ENCODE measurements at regions of chr2 and their contacts with region 1.

Region 1: GRCh38 chr2:99471654-99472599 is 17.9 kb downstream of the REV1 start:
- DNase-seq: no peak
- ATAC-seq: no peak
- H3K4me3 ChIP-seq: no peak overlapping the region
- H3K27ac ChIP-seq: no peak overlapping the region
- H3K4me1 ChIP-seq: peaks cover 3% of the 10 kb centered on the region; the same call in 1 of the 2 replicates
- H3K27me3 ChIP-seq: no peaks in the 10 kb centered on the region
- CTCF ChIP-seq: no peak
- POLR2A ChIP-seq: no peak
- RAD21 ChIP-seq: no peak

Region 2: DNA sequence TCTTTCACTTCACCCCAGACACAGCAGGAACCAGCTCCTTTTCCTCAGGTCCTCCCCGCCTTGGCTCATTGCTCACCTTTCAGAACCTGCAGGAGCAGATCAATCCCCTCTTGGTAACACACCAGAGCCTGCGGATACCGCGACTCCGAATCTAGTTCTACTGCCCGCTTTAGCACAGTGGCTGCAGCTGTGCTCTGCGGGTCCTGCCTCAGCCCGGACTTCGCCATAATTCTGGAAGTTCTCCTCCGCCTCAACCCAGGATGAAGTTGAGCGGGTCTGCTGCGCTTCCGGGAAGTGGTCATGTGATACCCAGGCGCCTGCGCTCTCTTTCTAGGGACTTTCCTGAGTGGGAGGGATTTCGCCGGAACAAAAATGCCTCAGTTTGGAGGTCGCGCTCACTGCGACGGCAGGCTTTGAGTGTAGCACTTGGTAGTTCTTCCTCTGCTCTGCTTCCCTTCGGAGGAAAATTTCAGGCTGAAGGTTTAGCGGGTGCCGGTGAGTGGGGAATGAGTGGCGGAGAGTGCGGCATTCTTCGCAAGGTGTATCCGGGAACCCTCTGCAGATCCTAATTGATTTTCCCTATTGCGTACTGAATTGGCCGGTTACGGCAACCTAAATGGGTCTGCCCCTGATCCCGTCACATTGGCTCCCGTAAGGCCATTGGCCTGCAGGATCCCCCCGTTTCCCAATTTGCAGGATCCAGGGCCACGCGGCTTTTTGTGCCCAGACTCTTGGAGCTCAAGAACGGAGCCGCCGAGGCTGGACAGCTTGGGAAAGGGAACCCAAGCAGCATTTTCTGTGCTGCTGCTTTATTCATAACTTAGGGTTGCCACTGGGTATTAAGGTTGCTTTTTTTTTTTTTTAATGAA is 290.9 kb before region 1 on chr2 and contains the starts of genes MITD1 and MRPL30:
- CTCF ChIA-PET with region 1: no interaction called
- POLR2A ChIA-PET with region 1: no interaction called
- dilution Hi-C with region 1: no loop called
- in situ Hi-C with region 1: loop called (anchors 10 kb)
- intact Hi-C with region 1: no loop called
- DNase-seq: peak; percentile 96
- ATAC-seq: peak; percentile 97
- H3K4me3 ChIP-seq: peak within 1 kb of the TSS; percentile 75
- H3K27ac ChIP-seq: peak within 1 kb of the TSS; percentile 77
- H3K4me1 ChIP-seq: no peaks in the 10 kb centered on the region; the same call in 1 of the 2 replicates
- H3K27me3 ChIP-seq: no peaks in the 10 kb centered on the region
- CTCF ChIP-seq: no peak
- POLR2A ChIP-seq: peak; percentile 95
- RAD21 ChIP-seq: 0 out of 2 replicates have a peak, but pooled peaks have one; percentile 10
- total RNA-seq, gene MITD1: 4.3 and 19.4 TPM in 2 replicates
- total RNA-seq, gene MRPL30: 34.8 and 39.2 TPM in 2 replicates

Region 3: GRCh38 chr2:99430614-99431291 is 41.2 kb before region 1 on chr2:
- CTCF ChIA-PET with region 1: no interaction called
- POLR2A ChIA-PET with region 1: no interaction called
- dilution Hi-C with region 1: no loop called
- in situ Hi-C with region 1: no loop called
- intact Hi-C with region 1: loop called (anchors 5 kb)
- DNase-seq: peak; percentile 89
- ATAC-seq: peak; percentile 94
- H3K4me3 ChIP-seq: no peak overlapping the region
- H3K27ac ChIP-seq: no peak overlapping the region
- H3K4me1 ChIP-seq: peaks cover 7% of the 10 kb centered on the region
- H3K27me3 ChIP-seq: no peaks in the 10 kb centered on the region
- CTCF ChIP-seq: no peak
- POLR2A ChIP-seq: no peak
- RAD21 ChIP-seq: no peak

Region 4: GRCh38 chr2:99537910-99538485 is 66.1 kb after region 1 on chr2:
- CTCF ChIA-PET with region 1: no interaction called
- POLR2A ChIA-PET with region 1: no interaction called
- dilution Hi-C with region 1: no loop called
- in situ Hi-C with region 1: no loop called
- intact Hi-C with region 1: no loop called
- DNase-seq: no peak
- ATAC-seq: no peak
- H3K4me3 ChIP-seq: no peak overlapping the region
- H3K27ac ChIP-seq: no peak overlapping the region
- H3K4me1 ChIP-seq: no peaks in the 10 kb centered on the region; the same call in 1 of the 2 replicates
- H3K27me3 ChIP-seq: peaks cover 2% of the 10 kb centered on the region; the same call in 1 of the 2 replicates
- CTCF ChIP-seq: no peak
- POLR2A ChIP-seq: no peak
- RAD21 ChIP-seq: no peak